Activated naive CD4-positive, alpha-beta T cell treated with anti-CD3 and anti-CD28 coated beads for 36 hours (primary cell): ENCODE measurements at regions of chr12 and their contacts with region 1.

Region 1: DNA sequence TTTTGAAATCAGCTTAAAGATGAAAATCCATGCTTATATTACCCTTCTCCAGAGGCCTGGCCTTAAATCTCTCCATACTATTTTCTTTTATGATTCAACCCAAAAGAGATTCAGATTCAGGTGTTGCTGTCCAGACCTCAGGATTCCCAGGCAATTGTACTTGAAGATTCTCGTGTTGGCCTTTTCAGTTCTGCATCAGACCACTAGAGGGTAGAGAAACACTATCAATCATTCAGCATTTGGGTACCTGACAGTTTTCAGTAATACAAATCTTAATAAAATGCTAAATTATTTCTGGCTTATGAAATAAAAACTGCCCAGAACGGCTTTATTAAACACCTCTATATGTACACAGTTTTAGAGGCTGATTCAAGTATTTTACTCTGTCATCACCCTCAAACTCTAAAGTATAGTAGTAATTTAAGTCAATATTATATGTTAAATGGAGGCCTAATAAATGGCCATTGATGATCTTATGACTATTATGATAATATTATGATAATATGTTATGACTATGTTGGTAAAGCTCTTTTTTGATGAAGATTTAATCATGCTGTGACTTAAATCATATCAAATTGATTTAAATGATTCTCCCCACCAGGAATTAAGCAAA is 301.1 kb downstream of the DUSP6 start:
- DNase-seq: peak; percentile 37
- H3K4me3 Mint-ChIP-seq: no peak overlapping the region
- H3K27ac Mint-ChIP-seq: no peak overlapping the region
- H3K4me1 Mint-ChIP-seq: peaks cover 10% of the 10 kb centered on the region
- H3K27me3 Mint-ChIP-seq: no peaks in the 10 kb centered on the region

Region 2: GRCh38 chr12:88716240-88716639 is 334.9 kb before region 1 on chr12:
- CTCF ChIA-PET with region 1: no interaction called
- intact Hi-C with region 1: no loop called
- DNase-seq: no peak
- H3K4me3 Mint-ChIP-seq: no peak overlapping the region
- H3K27ac Mint-ChIP-seq: no peak overlapping the region
- H3K4me1 Mint-ChIP-seq: no peaks in the 10 kb centered on the region
- H3K27me3 Mint-ChIP-seq: no peaks in the 10 kb centered on the region

Region 3: DNA sequence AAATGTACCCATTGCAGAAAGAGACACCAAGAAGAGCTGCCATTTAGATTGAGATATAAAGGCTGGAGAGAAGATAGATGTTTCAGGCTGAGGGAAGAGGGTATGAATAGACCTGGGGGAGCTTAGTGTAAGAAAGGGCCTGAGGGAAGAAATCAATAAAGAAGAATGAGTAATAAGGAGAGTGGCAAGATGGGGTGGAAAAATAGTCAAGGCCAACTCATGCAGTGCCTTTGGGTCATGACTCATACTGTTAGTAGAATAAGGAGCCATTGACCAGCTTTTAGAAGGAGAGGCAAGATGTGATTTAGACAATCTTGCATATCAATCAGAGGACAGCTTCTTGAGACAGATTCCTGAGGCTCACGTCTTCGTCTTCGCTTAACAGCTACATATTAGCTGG is 13.6 kb after region 1 on chr12:
- CTCF ChIA-PET with region 1: interaction called, 3 read pairs
- intact Hi-C with region 1: loop called (anchors 1 kb)
- DNase-seq: no peak
- H3K4me3 Mint-ChIP-seq: no peak overlapping the region
- H3K27ac Mint-ChIP-seq: peak overlapping the region; percentile 4
- H3K4me1 Mint-ChIP-seq: peaks cover 29% of the 10 kb centered on the region
- H3K27me3 Mint-ChIP-seq: no peaks in the 10 kb centered on the region

Region 4: GRCh38 chr12:89529738-89530137 is 478.6 kb after region 1 on chr12:
- CTCF ChIA-PET with region 1: interaction called, 3 read pairs
- intact Hi-C with region 1: loop called (anchors 1 kb)
- DNase-seq: no peak
- H3K4me3 Mint-ChIP-seq: no peak overlapping the region
- H3K27ac Mint-ChIP-seq: no peak overlapping the region
- H3K4me1 Mint-ChIP-seq: peaks cover 9% of the 10 kb centered on the region
- H3K27me3 Mint-ChIP-seq: no peaks in the 10 kb centered on the region